Dendritic cell treated with granulocyte-macrophage colony-stimulating factor and Interleukin-4, amounts not matched to agents 40 ng/mL and 50 ng/mL, for 4 days (primary cell): ENCODE measurements at regions of chr3 and their contacts with region 1.

Region 1: DNA sequence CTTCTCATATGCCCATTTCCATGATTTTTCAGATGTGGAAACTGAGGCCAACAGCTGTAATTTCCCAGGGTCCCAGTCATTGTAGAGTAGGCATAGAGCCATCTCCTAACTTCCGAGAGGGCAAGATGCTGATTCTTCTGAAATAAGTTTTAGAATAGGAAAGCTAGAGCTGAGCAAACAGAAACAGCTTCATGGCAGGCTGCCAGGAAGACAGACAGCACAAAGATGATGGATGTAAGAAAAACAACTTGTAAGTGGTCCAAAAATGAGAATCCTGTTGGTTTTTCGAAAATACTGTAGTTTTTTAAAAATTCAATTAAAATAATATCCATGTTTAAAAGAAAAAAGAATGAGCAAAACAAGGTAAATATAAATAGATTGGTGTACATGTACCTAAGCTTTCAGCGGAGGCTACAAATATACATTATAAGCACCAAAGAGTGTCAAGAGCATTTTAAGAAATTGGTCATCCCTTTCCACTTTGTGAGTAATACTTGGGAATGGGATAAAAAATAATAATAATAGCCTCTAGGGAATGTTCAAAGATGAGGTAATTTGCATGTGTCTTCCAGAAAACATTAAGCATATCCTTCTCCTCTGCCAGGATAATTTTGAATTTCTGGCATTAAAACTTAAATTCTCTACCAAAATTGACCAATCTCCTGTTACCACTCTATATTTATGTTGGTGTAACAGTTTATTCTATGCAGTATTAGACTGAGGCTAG is 406.6 kb downstream of the MECOM start:
- H3K4me3 Mint-ChIP-seq: no peak overlapping the region
- H3K27ac Mint-ChIP-seq: no peak overlapping the region
- H3K4me1 Mint-ChIP-seq: no peaks in the 10 kb centered on the region
- H3K27me3 Mint-ChIP-seq: no peaks in the 10 kb centered on the region

Region 2: GRCh38 chr3:168497741-168498140 is 759.2 kb before region 1 on chr3:
- intact Hi-C with region 1: no loop called
- H3K4me3 Mint-ChIP-seq: no peak overlapping the region
- H3K27ac Mint-ChIP-seq: no peak overlapping the region
- H3K4me1 Mint-ChIP-seq: no peaks in the 10 kb centered on the region
- H3K27me3 Mint-ChIP-seq: no peaks in the 10 kb centered on the region

Region 3: GRCh38 chr3:168914662-168915061 is 342.3 kb before region 1 on chr3:
- intact Hi-C with region 1: loop called (anchors 10 kb)
- H3K4me3 Mint-ChIP-seq: no peak overlapping the region
- H3K27ac Mint-ChIP-seq: no peak overlapping the region
- H3K4me1 Mint-ChIP-seq: no peaks in the 10 kb centered on the region
- H3K27me3 Mint-ChIP-seq: no peaks in the 10 kb centered on the region

Region 4: GRCh38 chr3:169295126-169295525 is 38.2 kb after region 1 on chr3:
- intact Hi-C with region 1: no loop called
- H3K4me3 Mint-ChIP-seq: no peak overlapping the region
- H3K27ac Mint-ChIP-seq: no peak overlapping the region
- H3K4me1 Mint-ChIP-seq: no peaks in the 10 kb centered on the region
- H3K27me3 Mint-ChIP-seq: peaks cover 5% of the 10 kb centered on the region